PC-3 (cell line): ENCODE measurements at regions of chr20 and their contacts with region 1.

Region 1: GRCh38 chr20:58342104-58342960 is 32.8 kb downstream of the RAB22A start:
- DNase-seq: peak; percentile 97
- ATAC-seq: peak; percentile 78
- H3K4me3 ChIP-seq: peak overlapping the region; percentile 34
- H3K27ac ChIP-seq: peak overlapping the region; percentile 87
- H3K4me1 ChIP-seq: peaks cover 57% of the 10 kb centered on the region
- H3K27me3 ChIP-seq: no peaks in the 10 kb centered on the region
- CTCF ChIP-seq: no peak

Region 2: DNA sequence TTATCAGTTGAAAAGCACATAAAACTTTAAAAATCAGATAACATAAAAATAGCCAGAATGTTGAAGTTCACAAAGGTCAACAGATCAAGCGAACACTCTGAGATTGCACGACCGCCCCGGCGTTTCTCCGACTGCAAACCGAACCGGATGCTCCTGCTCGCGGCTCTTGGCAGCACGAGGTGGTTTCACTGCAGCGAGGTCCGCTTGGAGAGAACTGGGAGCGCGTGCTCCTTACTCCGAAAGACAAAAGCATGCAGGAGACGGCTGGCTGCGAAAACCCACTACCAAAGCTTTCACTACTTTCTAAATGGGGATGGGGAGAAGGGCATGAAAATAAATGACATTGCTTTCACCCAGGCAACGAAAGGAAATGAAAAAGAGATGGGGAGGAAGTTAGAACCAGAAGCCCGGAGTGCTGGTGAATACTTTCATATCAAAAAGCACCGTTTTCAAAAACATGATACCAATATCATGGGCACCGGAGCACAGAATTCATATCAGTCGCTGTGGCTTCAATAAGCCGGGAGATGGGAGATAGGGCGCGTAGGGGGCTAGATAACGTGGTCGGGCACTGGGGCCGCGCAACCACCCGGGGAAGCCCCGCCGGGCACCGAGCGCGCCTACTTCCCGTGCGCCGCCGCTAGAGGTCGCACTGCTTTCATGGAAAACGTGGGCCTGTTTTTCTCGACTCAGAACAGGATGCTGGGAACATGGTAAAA is 105.6 kb before region 1 on chr20:
- CTCF ChIA-PET with region 1: interaction called, 6 read pairs
- POLR2A ChIA-PET with region 1: no interaction called
- intact Hi-C with region 1: loop called (anchors 5 kb)
- DNase-seq: peak; percentile 90
- ATAC-seq: peak; percentile 88
- H3K4me3 ChIP-seq: peak overlapping the region; percentile 71
- H3K27ac ChIP-seq: peak overlapping the region; percentile 40
- H3K4me1 ChIP-seq: peaks cover 26% of the 10 kb centered on the region
- H3K27me3 ChIP-seq: no peaks in the 10 kb centered on the region
- CTCF ChIP-seq: peak; percentile 99

Region 3: DNA sequence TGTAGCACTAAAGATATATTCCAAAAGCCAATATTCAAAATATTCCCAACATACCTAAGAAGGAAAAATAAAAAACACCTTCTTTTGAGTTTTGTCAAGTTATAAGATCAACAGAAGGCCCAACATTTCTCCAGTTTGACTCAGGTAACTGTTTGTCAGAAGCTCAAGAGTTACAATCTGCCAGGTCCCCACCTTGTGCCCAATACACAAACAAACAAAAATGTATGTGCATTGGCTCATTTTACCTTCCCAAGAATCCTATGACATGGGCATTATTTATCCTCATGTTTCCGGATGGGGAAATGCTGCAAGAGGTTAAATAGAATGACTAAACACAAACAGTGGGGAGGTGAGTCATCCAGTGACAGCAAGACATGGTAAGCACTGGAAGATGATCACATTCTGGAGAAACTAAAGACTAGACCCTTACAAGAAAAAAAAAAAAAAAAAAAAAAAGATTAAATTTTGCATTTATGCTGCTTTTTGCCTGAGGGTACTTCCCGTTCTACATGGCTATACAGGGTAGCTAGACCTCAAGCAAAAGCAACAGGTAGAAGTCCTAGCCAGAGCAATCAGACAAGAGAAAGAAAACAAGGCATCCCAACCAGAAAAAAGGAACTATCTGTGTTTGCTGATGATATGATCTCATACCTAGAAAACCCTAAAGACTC is 90.3 kb before region 1 on chr20:
- CTCF ChIA-PET with region 1: no interaction called
- POLR2A ChIA-PET with region 1: no interaction called
- intact Hi-C with region 1: loop called (anchors 1 kb)
- DNase-seq: peak; percentile 99
- ATAC-seq: peak; percentile 98
- H3K4me3 ChIP-seq: peak overlapping the region; percentile 9
- H3K27ac ChIP-seq: peak overlapping the region; percentile 89
- H3K4me1 ChIP-seq: peaks cover 28% of the 10 kb centered on the region
- H3K27me3 ChIP-seq: no peaks in the 10 kb centered on the region
- CTCF ChIP-seq: no peak

Region 4: DNA sequence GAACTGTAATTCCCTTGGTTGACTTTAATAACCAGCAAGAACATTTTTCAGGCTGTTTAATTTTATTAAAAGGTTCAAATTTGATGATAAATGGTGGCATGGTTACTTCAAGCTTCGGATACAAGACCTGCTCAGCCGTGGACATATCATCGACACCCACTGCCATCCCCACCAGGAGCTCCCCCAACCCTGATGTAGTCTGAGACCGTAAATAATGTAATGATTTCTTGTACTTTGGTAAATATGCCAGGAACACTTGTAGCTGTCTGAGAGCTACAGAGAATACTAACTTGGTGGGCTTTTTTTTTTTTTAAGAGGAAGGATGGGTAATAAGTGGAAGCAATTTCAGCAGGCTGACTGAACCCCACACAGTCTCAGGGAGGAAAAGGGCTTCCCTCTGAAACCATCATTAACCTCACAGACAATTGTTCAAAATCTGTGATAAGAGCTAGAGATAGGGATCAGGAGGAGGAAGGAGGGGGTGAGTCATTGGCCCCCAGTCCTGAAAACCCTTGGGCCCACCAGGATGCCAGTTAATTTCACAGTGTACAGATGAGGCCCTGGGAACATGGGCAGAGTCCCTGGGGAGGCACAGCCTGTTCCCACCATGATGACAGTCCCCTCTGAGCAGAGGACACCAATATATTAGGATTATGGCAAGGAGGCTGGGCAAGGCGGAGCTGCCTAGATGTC is 116.9 kb after region 1 on chr20:
- CTCF ChIA-PET with region 1: no interaction called
- POLR2A ChIA-PET with region 1: interaction called, 25 read pairs
- intact Hi-C with region 1: no loop called
- DNase-seq: no peak
- ATAC-seq: no peak
- H3K4me3 ChIP-seq: no peak overlapping the region
- H3K27ac ChIP-seq: no peak overlapping the region
- H3K4me1 ChIP-seq: no peaks in the 10 kb centered on the region
- H3K27me3 ChIP-seq: no peaks in the 10 kb centered on the region
- CTCF ChIP-seq: no peak

Region 5: DNA sequence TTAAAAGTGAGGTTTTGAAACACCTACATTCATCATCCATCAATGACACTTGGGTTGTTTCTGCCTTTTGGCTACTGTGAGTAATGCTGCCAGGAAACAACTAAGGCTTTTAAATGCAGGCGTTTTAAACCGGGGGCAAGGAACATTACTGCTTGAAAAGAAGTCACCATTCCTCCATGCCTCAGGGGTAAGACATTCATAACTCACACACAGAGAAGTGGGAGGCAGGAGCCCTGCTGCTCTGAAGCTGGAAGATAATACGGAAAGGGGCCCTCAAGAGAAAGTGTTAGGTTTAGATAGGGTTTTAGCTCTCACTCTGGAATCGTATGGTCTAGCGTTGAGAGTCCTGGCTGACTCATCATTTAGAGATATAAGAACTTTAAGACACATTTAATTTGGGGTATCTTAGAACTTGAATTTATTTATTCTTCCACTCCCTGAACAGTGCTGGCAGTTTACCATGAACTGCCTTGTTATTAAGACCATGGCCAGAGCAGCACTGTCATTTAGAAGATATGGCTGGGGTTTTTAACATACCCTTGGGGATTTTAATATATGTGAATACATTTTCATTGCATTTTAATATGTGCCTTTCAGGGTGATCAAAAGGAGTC is 678.7 kb after region 1 on chr20:
- CTCF ChIA-PET with region 1: no interaction called
- POLR2A ChIA-PET with region 1: interaction called, 10 read pairs
- intact Hi-C with region 1: no loop called
- DNase-seq: peak; percentile 73
- ATAC-seq: peak; percentile 66
- H3K4me3 ChIP-seq: no peak overlapping the region
- H3K27ac ChIP-seq: no peak overlapping the region
- H3K4me1 ChIP-seq: peaks cover 17% of the 10 kb centered on the region
- H3K27me3 ChIP-seq: no peaks in the 10 kb centered on the region
- CTCF ChIP-seq: no peak